Spleen (tissue), 13 donors: ENCODE measurements at regions of chr10 and their contacts with region 1.

Region 1: GRCh38 chr10:63866075-63866746 is 345.0 kb downstream of the REEP3 start:
- DNase-seq: no peak
- H3K4me3 ChIP-seq: peak overlapping the region in 1 of 8 donors; percentile 33
- H3K27ac ChIP-seq: no peak overlapping the region
- H3K4me1 ChIP-seq: peaks cover 0 to 15% (median 11%) of the 10 kb centered on the region in 6 donors
- H3K27me3 ChIP-seq: peaks cover 0 to 33% (median 10%) of the 10 kb centered on the region in 7 donors
- CTCF ChIP-seq: peak in 10 of 11 experiments; percentile 29 to 89 (median 74)
- POLR2A ChIP-seq: no peak

Region 2: DNA sequence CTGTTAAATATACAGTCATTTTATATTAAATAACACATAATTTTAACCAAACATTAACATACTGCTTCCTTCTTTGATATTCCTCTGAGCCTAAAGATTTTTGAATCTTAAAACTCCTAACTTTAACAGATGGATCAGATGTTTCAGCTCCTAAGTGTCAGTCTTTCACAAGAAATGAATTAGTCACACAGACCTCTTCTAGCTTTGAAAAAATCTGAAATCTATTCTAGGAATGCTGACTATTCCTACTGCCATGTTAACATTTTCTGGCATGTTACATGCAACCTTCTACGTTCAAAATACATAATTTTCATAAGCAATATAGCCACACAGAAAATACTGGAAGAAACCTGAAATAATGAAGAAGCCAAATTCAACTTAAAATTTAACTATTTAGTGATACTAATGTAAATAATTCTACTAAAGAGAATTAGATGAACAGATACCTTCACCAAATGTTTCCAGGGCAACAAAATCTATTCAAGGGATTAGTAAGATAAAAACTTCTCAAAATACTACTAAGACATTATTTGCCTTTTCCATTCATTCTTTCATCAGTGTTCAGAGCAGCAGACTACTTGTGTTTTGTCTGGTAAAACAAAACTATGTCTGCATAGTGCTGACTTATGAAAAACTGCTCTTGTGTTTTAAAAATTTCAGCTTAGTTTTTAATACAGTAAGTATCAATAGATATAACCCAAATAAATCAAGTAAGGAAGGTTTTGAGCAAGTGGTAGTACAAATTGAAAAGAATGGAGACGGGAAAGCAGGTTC is 409.6 kb before region 1 on chr10:
- intact Hi-C with region 1: no loop called
- DNase-seq: no peak
- H3K4me3 ChIP-seq: no peak overlapping the region
- H3K27ac ChIP-seq: no peak overlapping the region
- H3K4me1 ChIP-seq: peaks cover 0 to 17% (median 0%) of the 10 kb centered on the region in 6 donors
- H3K27me3 ChIP-seq: no peaks in the 10 kb centered on the region
- CTCF ChIP-seq: no peak
- POLR2A ChIP-seq: no peak

Region 3: DNA sequence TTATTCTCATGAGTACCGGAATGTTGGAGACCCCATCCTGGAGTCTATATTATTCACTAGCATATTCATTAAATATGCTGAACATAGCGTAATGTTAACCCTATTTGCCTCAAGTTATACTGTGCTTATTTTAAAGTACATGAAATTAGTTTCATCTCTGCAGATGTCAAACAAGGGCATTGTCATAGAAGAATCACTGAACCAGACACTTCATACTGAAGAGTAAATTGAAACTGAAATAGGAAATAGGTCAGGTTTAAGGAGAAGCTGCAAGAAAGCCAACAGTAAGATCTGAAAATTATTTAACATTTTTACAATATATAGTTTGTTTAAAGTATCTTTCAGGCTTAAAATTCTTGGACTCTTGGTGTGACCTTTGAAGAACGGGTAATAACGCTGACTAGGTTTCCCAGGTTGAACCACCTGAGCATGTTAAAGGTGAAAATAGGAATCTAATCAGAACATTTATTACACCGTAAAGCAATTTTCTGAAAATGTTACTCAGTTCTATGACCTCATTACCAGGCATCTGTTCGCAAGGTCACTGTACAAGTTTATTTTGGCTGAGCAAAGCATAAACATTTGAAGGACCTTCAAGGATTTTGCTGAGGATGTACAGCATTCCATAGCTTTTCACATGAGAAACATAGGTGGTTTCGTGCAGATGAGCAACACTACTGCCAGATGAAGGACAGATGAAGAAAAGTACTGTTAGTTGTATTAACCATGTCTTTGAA is 262.3 kb before region 1 on chr10:
- intact Hi-C with region 1: no loop called
- DNase-seq: no peak
- H3K4me3 ChIP-seq: no peak overlapping the region
- H3K27ac ChIP-seq: no peak overlapping the region
- H3K4me1 ChIP-seq: peaks cover 0 to 12% (median 3%) of the 10 kb centered on the region in 6 donors
- H3K27me3 ChIP-seq: no peaks in the 10 kb centered on the region
- CTCF ChIP-seq: no peak
- POLR2A ChIP-seq: no peak

Region 4: DNA sequence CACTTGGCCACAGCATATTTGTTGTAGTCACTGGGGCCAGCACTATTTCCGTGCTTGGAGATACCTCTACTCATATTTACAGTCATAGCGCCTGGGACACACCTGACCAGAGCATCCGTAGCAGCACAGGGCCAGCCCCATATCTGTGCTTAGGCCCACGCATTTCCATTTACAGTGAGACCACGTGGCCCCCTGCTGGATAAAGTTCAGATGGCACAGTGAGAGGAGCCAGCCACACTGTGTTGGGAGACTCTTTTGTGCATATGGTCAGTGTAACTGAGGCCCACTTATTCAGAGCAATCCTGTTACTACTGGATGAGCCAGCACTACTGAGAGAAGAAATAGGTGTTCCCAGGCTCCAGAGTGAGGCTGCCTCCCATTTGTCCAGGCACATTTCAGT is 110.3 kb after region 1 on chr10:
- intact Hi-C with region 1: loop called (anchors 5 kb)
- DNase-seq: no peak
- H3K4me3 ChIP-seq: no peak overlapping the region
- H3K27ac ChIP-seq: no peak overlapping the region
- H3K4me1 ChIP-seq: peaks cover 0 to 3% (median 0%) of the 10 kb centered on the region in 6 donors
- H3K27me3 ChIP-seq: no peaks in the 10 kb centered on the region
- CTCF ChIP-seq: peak in 10 of 11 experiments; percentile 26 to 67 (median 56)
- POLR2A ChIP-seq: no peak